ENCODE measurements at regions of chr5 and their contacts with region 1.

Region 1: GRCh38 chr5:10103098-10103497 is 146.6 kb downstream of the ATPSCKMT start:
- DNase-seq: no peak
- H3K4me3 ChIP-seq: no peak overlapping the region
- H3K27ac ChIP-seq: no peak overlapping the region
- H3K4me1 ChIP-seq: no peaks in the 10 kb centered on the region
- H3K27me3 ChIP-seq: no peaks in the 10 kb centered on the region
- CTCF ChIP-seq: no peak
- EP300 ChIP-seq: no peak
- POLR2A ChIP-seq: no peak

Region 2: GRCh38 chr5:9698125-9698826 is 404.8 kb before region 1 on chr5:
- in situ Hi-C with region 1: no loop called
- intact Hi-C with region 1: no loop called
- DNase-seq: no peak
- H3K4me3 ChIP-seq: no peak overlapping the region
- H3K27ac ChIP-seq: no peak overlapping the region
- H3K4me1 ChIP-seq: no peaks in the 10 kb centered on the region
- H3K27me3 ChIP-seq: no peaks in the 10 kb centered on the region
- CTCF ChIP-seq: no peak
- EP300 ChIP-seq: no peak
- POLR2A ChIP-seq: no peak

Region 3: DNA sequence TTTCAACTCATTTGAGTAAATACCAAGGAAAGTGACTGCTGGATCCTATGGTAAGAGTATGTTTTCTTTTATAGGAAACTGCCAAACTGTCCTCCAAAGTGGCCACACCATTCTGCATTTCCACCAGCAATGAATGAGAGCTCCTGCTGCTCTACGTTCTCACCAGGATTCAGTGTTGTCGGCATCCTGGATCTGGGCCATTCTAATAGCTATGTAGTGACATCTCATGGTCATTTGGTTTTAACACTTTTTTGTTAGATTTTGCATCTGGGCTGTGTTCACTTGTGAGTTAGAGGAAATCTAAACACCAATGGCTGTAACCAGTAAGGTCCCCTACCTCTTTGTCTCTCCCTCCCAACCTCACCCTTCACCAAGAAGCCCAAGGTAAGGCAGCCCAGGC is 30.7 kb after region 1 on chr5:
- in situ Hi-C with region 1: no loop called
- intact Hi-C with region 1: loop called (anchors 1 kb)
- DNase-seq: no peak
- H3K4me3 ChIP-seq: no peak overlapping the region
- H3K27ac ChIP-seq: no peak overlapping the region
- H3K4me1 ChIP-seq: no peaks in the 10 kb centered on the region
- H3K27me3 ChIP-seq: no peaks in the 10 kb centered on the region
- CTCF ChIP-seq: no peak
- EP300 ChIP-seq: no peak
- POLR2A ChIP-seq: no peak

Measured in transverse colon (tissue), 4 donors.